PC-9 (cell line): ENCODE measurements at regions of chr5 and their contacts with region 1.

Region 1: GRCh38 chr5:127934791-127935256 is 148.7 kb upstream of the SLC12A2 start:
- DNase-seq: peak; percentile 76 to 100
- H3K4me3 ChIP-seq: no peak overlapping the region
- H3K27ac ChIP-seq: peak overlapping the region; percentile 78
- H3K4me1 ChIP-seq: peaks cover 54% of the 10 kb centered on the region
- H3K27me3 ChIP-seq: no peaks in the 10 kb centered on the region
- CTCF ChIP-seq: peak; percentile 51

Region 2: DNA sequence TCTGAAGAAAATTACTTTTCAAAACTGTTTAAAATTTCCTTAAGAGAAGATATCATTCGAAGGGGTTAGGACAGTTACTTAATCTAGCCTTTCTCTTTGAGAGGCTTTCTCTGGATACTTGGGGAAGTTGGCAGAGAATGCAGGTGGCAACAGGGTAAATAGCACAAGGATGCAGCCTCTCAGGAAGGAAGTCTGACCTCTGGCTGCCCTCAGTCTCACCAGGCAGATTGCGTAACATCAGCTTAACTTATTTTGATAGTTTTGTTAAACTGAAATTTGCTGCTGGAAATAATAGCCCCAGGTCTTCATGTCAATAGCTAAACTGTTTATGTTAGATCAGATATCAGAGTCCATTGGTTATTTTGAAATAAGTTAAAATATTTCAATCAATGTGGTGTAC is 211.3 kb before region 1 on chr5:
- CTCF ChIA-PET with region 1: no interaction called
- POLR2A ChIA-PET with region 1: no interaction called
- intact Hi-C with region 1: no loop called
- DNase-seq: peak in 1 of 2 experiments; percentile 76
- H3K4me3 ChIP-seq: no peak overlapping the region
- H3K27ac ChIP-seq: no peak overlapping the region
- H3K4me1 ChIP-seq: peaks cover 11% of the 10 kb centered on the region
- H3K27me3 ChIP-seq: no peaks in the 10 kb centered on the region
- CTCF ChIP-seq: no peak

Region 3: DNA sequence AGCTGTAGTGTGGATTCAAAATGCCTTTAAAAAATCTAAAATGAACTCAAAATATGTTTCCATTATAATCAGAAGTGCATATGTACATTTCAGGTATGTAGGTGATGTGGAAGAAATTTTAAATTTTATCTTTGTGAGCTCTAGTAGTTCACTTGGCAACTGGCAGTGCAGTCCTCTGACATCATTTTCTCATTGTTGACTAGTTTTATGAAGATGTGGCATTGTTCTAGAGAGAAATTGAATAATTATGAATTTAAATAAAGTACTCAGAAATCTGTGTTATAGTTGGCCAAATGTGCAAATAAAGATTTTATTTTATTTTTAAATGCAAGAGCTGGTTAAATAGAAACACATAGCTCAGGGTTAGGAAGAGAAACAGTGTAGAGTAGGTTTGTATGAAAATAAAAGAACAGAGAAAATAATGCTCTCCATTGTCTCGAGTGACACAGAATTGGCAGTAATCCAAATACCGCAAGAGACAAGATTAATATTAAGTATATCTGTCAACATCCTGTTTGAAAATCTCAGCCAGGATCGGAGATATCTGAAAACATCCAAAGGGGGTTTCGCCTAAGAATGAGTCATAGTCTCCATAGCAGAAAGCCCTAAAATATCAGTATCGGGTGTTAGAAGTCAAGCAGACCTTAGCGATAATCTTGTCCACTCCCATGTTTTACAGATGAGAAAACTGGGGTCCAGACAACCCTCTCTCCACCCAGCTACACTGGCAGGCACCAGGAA is 42.2 kb before region 1 on chr5:
- CTCF ChIA-PET with region 1: no interaction called
- POLR2A ChIA-PET with region 1: interaction called, 9 read pairs
- intact Hi-C with region 1: loop called (anchors 1 kb)
- DNase-seq: peak; percentile 35 to 80
- H3K4me3 ChIP-seq: no peak overlapping the region
- H3K27ac ChIP-seq: peak overlapping the region; percentile 75
- H3K4me1 ChIP-seq: peaks cover 23% of the 10 kb centered on the region
- H3K27me3 ChIP-seq: no peaks in the 10 kb centered on the region
- CTCF ChIP-seq: no peak

Region 4: GRCh38 chr5:127988146-127988760 is 53.4 kb after region 1 on chr5:
- CTCF ChIA-PET with region 1: no interaction called
- POLR2A ChIA-PET with region 1: no interaction called
- intact Hi-C with region 1: loop called (anchors 5 kb)
- DNase-seq: peak; percentile 53 to 81
- H3K4me3 ChIP-seq: no peak overlapping the region
- H3K27ac ChIP-seq: peak overlapping the region; percentile 49
- H3K4me1 ChIP-seq: peaks cover 14% of the 10 kb centered on the region
- H3K27me3 ChIP-seq: no peaks in the 10 kb centered on the region
- CTCF ChIP-seq: no peak

Region 5: DNA sequence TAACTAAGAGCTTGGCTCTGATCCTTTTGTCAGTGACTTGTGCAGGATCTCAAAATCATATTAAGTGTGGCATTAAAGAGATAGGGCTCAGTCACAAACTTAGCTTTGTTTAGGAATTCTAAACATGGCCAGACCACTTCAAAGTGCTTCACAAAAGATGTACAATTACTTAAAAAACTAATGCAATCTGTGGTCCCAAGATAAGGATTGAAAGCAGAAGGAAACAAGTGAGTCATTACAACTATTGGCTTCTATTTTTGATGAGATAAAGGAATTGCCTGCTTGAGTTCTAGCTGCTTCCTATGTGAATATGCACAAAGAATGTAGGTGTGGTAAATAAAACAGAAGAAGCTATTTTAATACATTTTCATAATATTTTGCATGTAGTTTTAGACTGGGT is 103.8 kb after region 1 on chr5:
- CTCF ChIA-PET with region 1: no interaction called
- POLR2A ChIA-PET with region 1: no interaction called
- intact Hi-C with region 1: loop called (anchors 2 kb)
- DNase-seq: peak in 1 of 2 experiments; percentile 91
- H3K4me3 ChIP-seq: no peak overlapping the region
- H3K27ac ChIP-seq: peak overlapping the region; percentile 72
- H3K4me1 ChIP-seq: peaks cover 35% of the 10 kb centered on the region
- H3K27me3 ChIP-seq: no peaks in the 10 kb centered on the region
- CTCF ChIP-seq: no peak

Region 6: DNA sequence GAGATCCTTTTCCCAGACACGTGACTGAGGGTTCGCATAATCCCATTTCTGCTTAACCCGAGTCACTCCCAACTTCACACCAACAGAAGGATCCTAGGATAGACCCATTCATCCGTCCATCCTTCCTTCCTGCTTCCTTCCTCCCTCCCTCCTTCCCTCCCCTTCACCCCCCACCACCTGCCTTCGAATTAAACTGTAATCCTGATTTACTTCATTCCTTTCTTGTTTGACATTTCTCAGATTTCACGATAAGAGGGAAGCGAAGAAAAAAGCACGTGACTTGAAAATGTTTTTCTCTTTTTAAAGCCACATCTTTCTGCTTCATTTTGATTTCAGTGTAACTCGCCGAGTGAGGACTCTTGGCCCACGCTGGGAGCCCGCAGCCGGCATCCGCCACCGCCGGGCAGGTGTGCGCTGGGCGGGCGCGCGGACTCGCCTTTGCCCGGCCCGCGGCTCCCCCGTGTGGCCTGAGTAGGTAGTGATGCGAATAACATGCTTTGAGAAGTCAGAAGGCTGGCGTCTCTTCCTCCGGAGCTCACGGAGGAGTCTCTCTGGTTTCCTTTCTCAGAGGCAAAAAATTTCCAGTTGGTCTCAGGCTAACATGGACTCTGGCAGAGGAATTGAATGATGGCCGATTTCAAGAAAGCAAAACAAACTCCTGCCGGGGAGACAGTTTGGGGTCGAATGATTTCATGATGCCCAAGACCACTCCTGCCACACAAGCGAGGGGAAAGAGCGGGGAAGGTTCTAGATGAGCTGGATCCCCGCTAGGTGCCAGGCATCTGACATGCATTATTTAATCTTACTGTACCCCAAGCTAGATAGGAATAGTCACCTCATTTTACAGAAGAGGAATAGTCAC is 266.5 kb after region 1 on chr5:
- CTCF ChIA-PET with region 1: no interaction called
- POLR2A ChIA-PET with region 1: no interaction called
- intact Hi-C with region 1: loop called (anchors 1 kb)
- DNase-seq: peak; percentile 86 to 91
- H3K4me3 ChIP-seq: peak overlapping the region; percentile 44; the same call in 1 of the 2 replicates
- H3K27ac ChIP-seq: peak overlapping the region; percentile 99
- H3K4me1 ChIP-seq: peaks cover 50% of the 10 kb centered on the region
- H3K27me3 ChIP-seq: no peaks in the 10 kb centered on the region
- CTCF ChIP-seq: peak; percentile 90

Region 7: GRCh38 chr5:129773376-129773775 is 1838.6 kb after region 1 on chr5:
- CTCF ChIA-PET with region 1: no interaction called
- POLR2A ChIA-PET with region 1: no interaction called
- intact Hi-C with region 1: no loop called
- DNase-seq: no peak
- H3K4me3 ChIP-seq: no peak overlapping the region
- H3K27ac ChIP-seq: no peak overlapping the region
- H3K4me1 ChIP-seq: no peaks in the 10 kb centered on the region
- H3K27me3 ChIP-seq: no peaks in the 10 kb centered on the region
- CTCF ChIP-seq: no peak